A549 (cell line): ENCODE measurements at regions of chr2 and their contacts with region 1.

Region 1: GRCh38 chr2:189762551-189763298 is at the start of gene OSGEPL1:
- DNase-seq: peak; percentile 60 to 97
- ATAC-seq: peak; percentile 98 to 99
- H3K4me3 ChIP-seq: peak within 1 kb of the TSS; percentile 95
- H3K27ac ChIP-seq: peak within 1 kb of the TSS; percentile 94 to 98
- H3K4me1 ChIP-seq: peaks cover 13% of the 10 kb centered on the region
- CTCF ChIP-seq: peak; percentile 66
- EP300 ChIP-seq: no peak
- POLR2A ChIP-seq: peak; percentile 88
- RAD21 ChIP-seq: peak in 1 of 2 experiments; percentile 14; a peak in 1 of 5 replicates
- polyA plus RNA-seq, gene OSGEPL1: 13.3 and 14.4 TPM in 2 replicates

Region 2: DNA sequence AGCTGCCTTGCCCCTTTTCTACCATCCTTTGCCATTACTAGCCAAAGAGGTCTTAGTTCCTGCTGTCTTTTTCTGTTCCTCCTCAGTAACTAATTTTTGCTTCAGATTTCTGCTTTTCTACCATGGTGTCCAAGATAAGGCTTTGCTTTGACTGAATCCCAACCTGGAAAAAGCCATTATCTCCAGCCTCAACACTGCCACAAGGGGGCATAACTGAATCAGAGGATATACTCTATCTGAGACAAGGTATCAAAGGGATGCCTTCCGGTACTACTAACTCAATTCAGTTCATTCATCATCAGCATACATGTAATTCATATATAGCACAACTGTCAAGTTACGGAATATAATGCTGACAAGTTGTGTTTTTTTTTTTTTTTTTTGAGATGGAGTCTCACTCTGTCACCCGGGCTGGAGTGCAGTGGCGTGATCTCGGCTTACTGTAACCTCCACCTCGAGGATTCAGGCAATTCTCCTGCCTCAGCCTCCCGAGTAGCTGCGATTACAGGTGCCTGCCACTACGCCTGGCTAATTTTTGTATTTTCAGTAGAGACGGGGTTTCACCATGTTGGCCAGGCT is 11.6 kb before region 1 on chr2:
- CTCF ChIA-PET with region 1: interaction called, 40 read pairs
- POLR2A ChIA-PET with region 1: no interaction called
- DNase-seq: peak; percentile 38 to 44
- ATAC-seq: peak; percentile 84 to 92; a peak in 5 of 6 replicates
- H3K4me3 ChIP-seq: no peak overlapping the region
- H3K27ac ChIP-seq: no peak overlapping the region
- H3K4me1 ChIP-seq: peaks cover 5% of the 10 kb centered on the region; the same call in 1 of the 3 replicates
- CTCF ChIP-seq: peak; percentile 60
- EP300 ChIP-seq: no peak
- POLR2A ChIP-seq: no peak
- RAD21 ChIP-seq: peak; percentile 45 to 64

Region 3: DNA sequence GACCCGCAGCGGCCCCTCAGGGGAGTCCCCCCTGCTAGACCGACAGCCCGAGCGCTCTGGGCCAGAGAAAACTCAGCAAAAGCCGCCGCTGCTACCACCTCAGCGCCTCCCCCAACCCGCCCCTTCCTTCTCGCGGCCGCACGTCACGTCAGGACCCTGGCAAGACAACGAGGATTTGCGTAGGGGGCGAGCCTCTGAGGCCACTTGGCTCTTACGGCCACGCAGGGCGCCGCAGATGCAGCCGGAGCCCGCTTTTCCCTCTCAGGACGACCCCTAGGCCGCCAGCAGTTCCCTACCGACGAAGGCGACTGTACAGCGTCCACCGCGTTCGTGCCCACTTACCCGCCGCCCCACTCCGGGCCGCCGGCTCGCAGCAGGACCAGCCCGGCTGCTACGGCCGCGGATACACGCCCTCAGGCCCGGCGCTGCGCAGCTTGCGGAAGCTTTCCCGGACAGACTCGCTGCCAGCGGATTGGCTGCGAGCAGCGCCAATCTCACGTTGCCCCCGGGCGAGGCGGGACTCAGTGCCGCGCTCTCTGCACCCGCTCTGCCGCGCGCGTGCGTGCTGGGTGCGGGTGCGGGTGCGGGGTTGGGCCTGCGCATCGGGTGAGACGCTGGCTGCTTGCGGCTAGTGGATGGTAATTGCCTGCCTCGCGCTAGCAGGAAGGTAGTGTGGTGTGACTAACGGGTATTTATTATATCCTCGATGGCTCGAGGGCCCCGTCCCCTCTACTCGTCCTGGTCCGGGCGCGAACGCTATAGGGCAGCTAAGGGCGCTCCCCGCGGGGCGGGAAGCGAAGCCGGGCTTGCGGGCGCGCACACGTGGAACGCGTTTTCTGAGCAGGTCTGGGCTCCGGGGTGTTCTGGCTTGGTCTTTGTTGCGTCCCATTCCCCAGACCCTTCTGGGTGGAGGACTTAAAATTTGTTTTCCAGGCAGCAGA is 21.5 kb after region 1 on chr2 and contains the starts of genes ORMDL1 and PMS1:
- CTCF ChIA-PET with region 1: interaction called, 6 read pairs
- POLR2A ChIA-PET with region 1: interaction called, 10 read pairs
- DNase-seq: peak; percentile 82 to 97
- ATAC-seq: peak; percentile 97 to 98
- H3K4me3 ChIP-seq: peak within 1 kb of the TSS; percentile 88
- H3K27ac ChIP-seq: peak within 1 kb of the TSS; percentile 89 to 96
- H3K4me1 ChIP-seq: peaks cover 13% of the 10 kb centered on the region; the same call in 2 of the 3 replicates
- CTCF ChIP-seq: no peak
- EP300 ChIP-seq: no peak
- POLR2A ChIP-seq: peak; percentile 78
- RAD21 ChIP-seq: no peak
- polyA plus RNA-seq, gene ORMDL1: 100 and 106 TPM in 2 replicates
- polyA plus RNA-seq, gene PMS1: 21.2 and 28.9 TPM in 2 replicates

Region 4: GRCh38 chr2:189837326-189837725 is 74.6 kb after region 1 on chr2:
- CTCF ChIA-PET with region 1: no interaction called
- POLR2A ChIA-PET with region 1: no interaction called
- DNase-seq: no peak
- ATAC-seq: no peak
- H3K4me3 ChIP-seq: no peak overlapping the region
- H3K27ac ChIP-seq: peak overlapping the region; percentile 79 to 86
- H3K4me1 ChIP-seq: peaks cover 25% of the 10 kb centered on the region
- CTCF ChIP-seq: no peak
- EP300 ChIP-seq: no peak
- POLR2A ChIP-seq: no peak
- RAD21 ChIP-seq: no peak